Ascending aorta (tissue), 2 donors: ENCODE measurements at regions of chr7 and their contacts with region 1.

Region 1: GRCh38 chr7:140326116-140326928 is 72.0 kb downstream of the SLC37A3 start:
- DNase-seq: peak in 1 of 2 donors; percentile 83
- H3K4me3 ChIP-seq: peak overlapping the region in 1 of 2 donors; percentile 40
- H3K27ac ChIP-seq: peak overlapping the region; percentile 14 to 36
- H3K4me1 ChIP-seq: peaks cover 0 to 3% of the 10 kb centered on the region in 2 donors
- H3K27me3 ChIP-seq: no peaks in the 10 kb centered on the region
- CTCF ChIP-seq: peak; percentile 66 to 84 (median 66)

Region 2: DNA sequence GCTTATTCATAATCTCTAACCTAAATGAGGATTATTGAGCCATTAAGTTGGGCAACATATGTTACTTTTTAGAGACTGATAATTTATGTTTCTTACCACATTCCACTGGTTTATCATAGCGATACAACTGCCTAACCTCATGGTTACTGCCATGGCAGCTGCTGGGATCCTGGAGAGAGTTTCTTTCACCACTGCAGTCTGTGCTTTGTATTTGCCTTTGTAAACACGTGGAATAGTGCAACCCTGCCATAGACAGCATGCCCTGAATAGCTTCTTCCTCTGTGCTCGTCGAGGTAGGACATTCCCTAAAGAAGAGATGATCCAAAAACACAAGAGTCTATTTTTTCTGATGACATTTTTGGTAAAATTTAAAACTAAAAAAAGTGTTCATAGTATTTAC is 229.9 kb before region 1 on chr7:
- intact Hi-C with region 1: loop called (anchors 10 kb)
- DNase-seq: no peak
- H3K4me3 ChIP-seq: no peak overlapping the region
- H3K27ac ChIP-seq: no peak overlapping the region
- H3K4me1 ChIP-seq: no peaks in the 10 kb centered on the region
- H3K27me3 ChIP-seq: no peaks in the 10 kb centered on the region
- CTCF ChIP-seq: no peak

Region 3: GRCh38 chr7:140439359-140439758 is 113.0 kb after region 1 on chr7:
- intact Hi-C with region 1: no loop called
- DNase-seq: no peak
- H3K4me3 ChIP-seq: no peak overlapping the region
- H3K27ac ChIP-seq: no peak overlapping the region
- H3K4me1 ChIP-seq: no peaks in the 10 kb centered on the region
- H3K27me3 ChIP-seq: no peaks in the 10 kb centered on the region
- CTCF ChIP-seq: no peak